ENCODE measurements at regions of chr13 and their contacts with region 1.

Region 1: GRCh38 chr13:39132286-39133230 is 94.3 kb downstream of the NHLRC3 start:
- DNase-seq: no peak
- H3K4me3 ChIP-seq: no peak overlapping the region
- H3K27ac ChIP-seq: no peak overlapping the region
- H3K4me1 ChIP-seq: no peaks in the 10 kb centered on the region
- H3K27me3 ChIP-seq: no peaks in the 10 kb centered on the region
- CTCF ChIP-seq: no peak
- POLR2A ChIP-seq: no peak

Region 2: DNA sequence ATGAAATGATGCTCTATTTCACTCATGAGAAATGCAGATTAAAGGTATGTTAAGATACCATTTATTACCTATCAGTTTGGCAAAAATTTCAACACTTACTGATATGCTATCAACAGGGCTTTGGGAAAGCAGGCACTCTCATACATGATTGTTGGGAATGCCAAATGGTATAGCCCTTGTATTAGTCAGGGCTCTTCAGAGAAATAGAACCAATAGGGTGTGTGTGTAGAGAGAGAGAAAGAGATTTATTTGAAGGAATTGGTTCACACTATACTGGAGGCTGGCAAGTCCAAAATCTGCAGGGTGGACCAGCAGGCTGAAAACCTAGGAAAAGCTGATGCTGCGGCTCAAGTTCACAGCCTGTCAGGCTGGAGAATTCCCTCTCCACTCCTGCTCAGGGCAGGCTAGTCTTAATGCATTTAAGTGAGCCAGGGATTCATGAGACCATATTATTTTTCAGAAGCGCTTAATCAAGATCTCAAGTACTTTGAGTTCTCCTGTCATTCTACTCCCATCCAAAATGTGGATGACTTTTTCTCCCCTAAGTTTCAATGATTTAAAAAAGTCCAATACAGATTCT is 21.9 kb before region 1 on chr13:
- intact Hi-C with region 1: no loop called
- DNase-seq: no peak
- H3K4me3 ChIP-seq: no peak overlapping the region
- H3K27ac ChIP-seq: no peak overlapping the region
- H3K4me1 ChIP-seq: no peaks in the 10 kb centered on the region
- H3K27me3 ChIP-seq: no peaks in the 10 kb centered on the region
- CTCF ChIP-seq: no peak
- POLR2A ChIP-seq: no peak

Region 3: GRCh38 chr13:39159393-39159792 is 26.8 kb after region 1 on chr13:
- intact Hi-C with region 1: loop called (anchors 2 kb)
- DNase-seq: no peak
- H3K4me3 ChIP-seq: no peak overlapping the region
- H3K27ac ChIP-seq: no peak overlapping the region
- H3K4me1 ChIP-seq: no peaks in the 10 kb centered on the region
- H3K27me3 ChIP-seq: no peaks in the 10 kb centered on the region
- CTCF ChIP-seq: no peak
- POLR2A ChIP-seq: no peak

Region 4: GRCh38 chr13:39209731-39210531 is 77.4 kb after region 1 on chr13:
- intact Hi-C with region 1: no loop called
- DNase-seq: no peak
- H3K4me3 ChIP-seq: no peak overlapping the region
- H3K27ac ChIP-seq: peak overlapping the region in 1 of 2 donors; percentile 28
- H3K4me1 ChIP-seq: no peaks in the 10 kb centered on the region
- H3K27me3 ChIP-seq: no peaks in the 10 kb centered on the region
- CTCF ChIP-seq: no peak
- POLR2A ChIP-seq: no peak